GM12878 (cell line): ENCODE measurements at regions of chr17 and their contacts with region 1.

Region 1: GRCh38 chr17:74379495-74380085 is 12.3 kb downstream of the GPR142 start:
- DNase-seq: peak; percentile 40
- ATAC-seq: peak; percentile 98
- H3K4me3 ChIP-seq: no peak overlapping the region
- H3K27ac ChIP-seq: no peak overlapping the region
- H3K4me1 ChIP-seq: no peaks in the 10 kb centered on the region
- H3K27me3 ChIP-seq: no peaks in the 10 kb centered on the region
- CTCF ChIP-seq: peak; percentile 81 to 97 (median 94); a peak in 5 of 6 replicates
- EP300 ChIP-seq: no peak
- POLR2A ChIP-seq: no peak
- RAD21 ChIP-seq: peak; percentile 99

Region 2: DNA sequence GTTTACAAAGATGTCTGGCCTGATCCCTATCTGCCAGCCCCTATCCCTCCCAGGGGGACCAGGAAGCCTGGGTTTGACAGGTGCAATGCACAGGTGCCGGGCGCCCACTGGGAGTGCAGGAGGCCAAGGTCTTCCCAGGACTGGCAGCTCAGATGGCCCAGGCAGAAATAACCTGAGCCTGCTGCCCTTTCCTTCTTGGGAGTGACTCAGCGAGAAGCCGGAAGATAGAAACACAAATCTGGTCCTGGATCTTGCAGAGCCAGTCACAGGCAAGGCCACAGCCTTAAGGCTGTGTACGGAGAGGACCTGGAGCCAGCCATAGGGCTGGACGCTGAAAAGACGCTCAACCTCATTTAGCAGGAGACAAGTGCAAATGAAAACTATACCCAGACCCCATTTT is 15.4 kb after region 1 on chr17:
- CTCF ChIA-PET with region 1: interaction called, 14 read pairs
- POLR2A ChIA-PET with region 1: no interaction called
- RAD21 ChIA-PET with region 1: interaction called, 5 read pairs
- SMC1A ChIA-PET with region 1: interaction called, 6 read pairs
- in situ Hi-C with region 1: no loop called
- intact Hi-C with region 1: no loop called
- DNase-seq: no peak
- ATAC-seq: no peak
- H3K4me3 ChIP-seq: no peak overlapping the region
- H3K27ac ChIP-seq: no peak overlapping the region
- H3K4me1 ChIP-seq: no peaks in the 10 kb centered on the region
- H3K27me3 ChIP-seq: no peaks in the 10 kb centered on the region; a peak in 1 of 4 replicates
- CTCF ChIP-seq: no peak
- EP300 ChIP-seq: no peak
- POLR2A ChIP-seq: no peak
- RAD21 ChIP-seq: no peak

Region 3: GRCh38 chr17:74467221-74467951 is 87.8 kb after region 1 on chr17:
- CTCF ChIA-PET with region 1: interaction called, 12 read pairs
- POLR2A ChIA-PET with region 1: no interaction called
- RAD21 ChIA-PET with region 1: interaction called, 8 read pairs
- SMC1A ChIA-PET with region 1: interaction called, 5 read pairs
- in situ Hi-C with region 1: no loop called
- intact Hi-C with region 1: no loop called
- DNase-seq: peak; percentile 95
- ATAC-seq: peak; percentile 78
- H3K4me3 ChIP-seq: peak overlapping the region; percentile 86
- H3K27ac ChIP-seq: peak overlapping the region; percentile 92
- H3K4me1 ChIP-seq: peaks cover 35% of the 10 kb centered on the region
- H3K27me3 ChIP-seq: no peaks in the 10 kb centered on the region
- CTCF ChIP-seq: no peak
- EP300 ChIP-seq: peak; percentile 68 to 79
- POLR2A ChIP-seq: peak; percentile 58; the same call in 1 of the 2 replicates
- RAD21 ChIP-seq: 0 out of 2 replicates have a peak, but pooled peaks have one; percentile 3

Region 4: GRCh38 chr17:74502861-74503260 is 123.3 kb after region 1 on chr17:
- CTCF ChIA-PET with region 1: interaction called, 82 read pairs
- POLR2A ChIA-PET with region 1: no interaction called
- RAD21 ChIA-PET with region 1: interaction called, 3 read pairs
- SMC1A ChIA-PET with region 1: interaction called, 10 read pairs
- in situ Hi-C with region 1: no loop called
- intact Hi-C with region 1: no loop called
- DNase-seq: no peak
- ATAC-seq: no peak
- H3K4me3 ChIP-seq: no peak overlapping the region
- H3K27ac ChIP-seq: no peak overlapping the region
- H3K4me1 ChIP-seq: no peaks in the 10 kb centered on the region
- H3K27me3 ChIP-seq: no peaks in the 10 kb centered on the region
- CTCF ChIP-seq: no peak
- EP300 ChIP-seq: no peak
- POLR2A ChIP-seq: no peak
- RAD21 ChIP-seq: no peak

Region 5: DNA sequence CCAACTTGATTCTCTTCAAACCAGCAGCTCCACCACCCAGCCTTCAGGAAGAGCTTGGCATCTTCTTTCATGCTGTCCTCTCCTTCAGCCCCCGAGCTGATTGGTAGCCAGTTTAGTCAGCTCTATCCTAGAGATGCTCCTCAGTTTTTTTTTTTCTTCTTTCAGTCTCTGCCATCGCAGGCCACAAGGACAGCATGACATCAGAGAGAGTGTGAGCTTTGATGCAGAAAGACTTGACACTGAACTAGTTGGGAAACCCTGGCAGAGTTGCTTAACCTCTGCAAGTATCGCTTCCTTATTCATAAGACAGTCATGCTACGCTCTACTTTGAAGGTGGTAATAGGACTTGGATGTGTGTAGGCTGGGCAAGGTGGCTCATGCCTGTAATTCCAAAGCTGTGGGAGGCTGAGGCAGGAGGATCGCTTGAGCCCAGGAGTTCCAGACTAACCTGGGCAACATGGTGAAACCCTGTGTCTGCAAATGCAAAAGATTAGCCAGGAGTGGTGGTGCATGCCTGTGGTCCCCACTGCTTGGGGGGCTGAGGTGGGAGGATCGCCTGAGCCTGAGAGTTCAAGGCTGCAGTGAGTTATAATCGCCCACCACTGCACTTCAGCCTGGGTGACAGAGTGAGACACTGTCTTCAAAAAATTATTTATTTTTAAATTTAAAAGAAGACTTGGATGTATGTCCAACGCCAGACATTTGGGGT is 149.1 kb after region 1 on chr17:
- CTCF ChIA-PET with region 1: interaction called, 51 read pairs
- POLR2A ChIA-PET with region 1: interaction called, 4 read pairs
- RAD21 ChIA-PET with region 1: interaction called, 45 read pairs
- SMC1A ChIA-PET with region 1: interaction called, 32 read pairs
- in situ Hi-C with region 1: no loop called
- intact Hi-C with region 1: no loop called
- DNase-seq: peak; percentile 76
- ATAC-seq: peak; percentile 91
- H3K4me3 ChIP-seq: no peak overlapping the region
- H3K27ac ChIP-seq: no peak overlapping the region
- H3K4me1 ChIP-seq: peaks cover 7% of the 10 kb centered on the region
- H3K27me3 ChIP-seq: peaks cover 0 to 1% of the 10 kb centered on the region in 2 experiments; a peak in 1 of 4 replicates
- CTCF ChIP-seq: no peak
- EP300 ChIP-seq: peak; percentile 37 to 71; a peak in 2 of 4 replicates
- POLR2A ChIP-seq: no peak
- RAD21 ChIP-seq: no peak